ENCODE measurements at regions of chr11 and their contacts with region 1.

Region 1: GRCh38 chr11:26649884-26650283 is 72.0 kb downstream of the SLC5A12 start:
- DNase-seq: peak; percentile 41 to 73 (median 55)
- H3K4me3 ChIP-seq: no peak overlapping the region
- H3K27ac ChIP-seq: no peak overlapping the region
- H3K4me1 ChIP-seq: no peaks in the 10 kb centered on the region
- H3K27me3 ChIP-seq: no peaks in the 10 kb centered on the region
- CTCF ChIP-seq: peak; percentile 35 to 72 (median 53)
- POLR2A ChIP-seq: no peak

Region 2: DNA sequence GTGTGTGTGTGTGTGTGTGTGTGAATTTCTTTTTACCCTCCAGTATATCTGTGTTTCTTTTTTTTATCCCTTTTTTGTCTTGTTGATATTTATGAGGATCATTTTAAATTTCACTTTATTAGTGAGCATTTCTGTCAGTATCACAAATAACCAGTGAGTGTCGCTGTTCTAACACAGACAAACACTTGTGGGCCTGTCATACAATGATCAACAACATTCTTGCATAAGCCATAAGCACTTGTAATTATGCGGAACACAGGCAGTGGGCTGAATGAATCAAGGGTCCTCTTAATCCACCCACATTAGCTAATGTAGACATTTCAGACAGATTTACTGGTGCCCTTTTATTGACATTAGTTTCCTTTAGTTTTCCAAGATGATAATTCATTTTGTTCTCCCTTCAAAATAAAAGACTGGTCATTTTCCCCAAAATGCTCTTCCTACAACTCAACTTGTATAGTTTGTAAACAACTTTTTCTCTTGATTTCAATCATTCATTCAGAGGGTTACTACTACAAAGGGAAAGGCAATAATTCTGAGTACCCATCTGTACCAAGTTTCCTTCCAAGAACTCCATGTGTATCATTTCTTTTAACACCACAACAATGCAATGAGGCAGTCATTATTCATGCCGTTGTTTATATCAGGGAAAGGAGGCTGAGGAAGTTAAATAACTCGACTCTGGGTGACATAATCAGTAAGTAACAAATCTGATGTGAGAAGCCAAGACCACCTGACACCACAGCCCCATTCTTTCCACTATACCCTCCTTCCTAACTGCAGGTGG is 352.5 kb before region 1 on chr11:
- intact Hi-C with region 1: loop called in 1 of 2 experiments (anchors 10 kb)
- DNase-seq: peak in 5 of 7 donors; percentile 19 to 39 (median 20)
- H3K4me3 ChIP-seq: no peak overlapping the region
- H3K27ac ChIP-seq: no peak overlapping the region
- H3K4me1 ChIP-seq: no peaks in the 10 kb centered on the region
- H3K27me3 ChIP-seq: peaks cover 6% of the 10 kb centered on the region
- CTCF ChIP-seq: peak; percentile 34 to 77 (median 62)
- POLR2A ChIP-seq: no peak

Region 3: DNA sequence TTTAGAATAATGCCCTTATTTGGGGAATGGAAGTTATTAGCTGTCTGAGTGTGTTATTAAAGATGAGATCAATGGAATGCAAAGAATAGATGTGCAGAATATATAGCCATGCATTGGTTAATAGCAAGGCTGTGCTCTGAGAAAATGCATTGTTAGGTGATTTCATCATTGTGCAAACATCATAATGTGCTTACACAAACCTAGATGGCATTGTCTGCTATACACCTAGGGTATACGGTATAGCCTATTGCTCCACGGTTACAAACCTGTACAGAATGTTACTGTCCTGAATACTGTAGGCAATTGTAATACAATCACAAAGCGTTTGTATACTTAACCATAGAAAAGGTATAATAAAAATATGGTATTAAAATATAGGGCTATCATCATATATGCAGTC is 46.4 kb after region 1 on chr11:
- intact Hi-C with region 1: no loop called
- DNase-seq: no peak
- H3K4me3 ChIP-seq: no peak overlapping the region
- H3K27ac ChIP-seq: no peak overlapping the region
- H3K4me1 ChIP-seq: no peaks in the 10 kb centered on the region
- H3K27me3 ChIP-seq: no peaks in the 10 kb centered on the region
- CTCF ChIP-seq: no peak
- POLR2A ChIP-seq: no peak

Measured in adrenal gland (tissue), 19 donors.